ENCODE measurements at regions of chr6 and their contacts with region 1.

Region 1: GRCh38 chr6:166999145-166999883 is at the start of gene CEP43:
- DNase-seq: peak; percentile 95 to 99 (median 97)
- ATAC-seq: peak; percentile 97
- H3K4me3 ChIP-seq: peak within 1 kb of the TSS; percentile 90 to 99
- H3K27ac ChIP-seq: peak within 1 kb of the TSS; percentile 64 to 84
- H3K4me1 ChIP-seq: peaks cover 7 to 40% of the 10 kb centered on the region in 2 donors
- H3K27me3 ChIP-seq: no peaks in the 10 kb centered on the region
- CTCF ChIP-seq: peak in 1 of 2 donors; percentile 42
- polyA plus RNA-seq, gene CEP43: 40.8 to 50.6 (median 47.5) TPM

Region 2: GRCh38 chr6:166365221-166365620 is 634.1 kb before region 1 on chr6:
- intact Hi-C with region 1: no loop called
- DNase-seq: no peak
- ATAC-seq: no peak
- H3K4me3 ChIP-seq: no peak overlapping the region
- H3K27ac ChIP-seq: no peak overlapping the region
- H3K4me1 ChIP-seq: peaks cover 0 to 6% of the 10 kb centered on the region in 2 donors
- H3K27me3 ChIP-seq: no peaks in the 10 kb centered on the region
- CTCF ChIP-seq: no peak

Region 3: GRCh38 chr6:166786704-166787293 is 212.5 kb before region 1 on chr6:
- intact Hi-C with region 1: loop called in 1 of 2 experiments (anchors 10 kb)
- DNase-seq: peak in 1 of 4 donors; percentile 56
- ATAC-seq: peak; percentile 82
- H3K4me3 ChIP-seq: no peak overlapping the region
- H3K27ac ChIP-seq: no peak overlapping the region
- H3K4me1 ChIP-seq: no peaks in the 10 kb centered on the region
- H3K27me3 ChIP-seq: no peaks in the 10 kb centered on the region
- CTCF ChIP-seq: peak; percentile 64 to 73

Measured in left lung (tissue), 14 donors.